Activated CD8-positive, alpha-beta T cell treated with anti-CD3 and anti-CD28 coated beads, Interleukin-2, amount 10 ng/mL, durations not matched to agents 7 days and 5 days (primary cell): ENCODE measurements at regions of chr5 and their contacts with region 1.

Region 1: GRCh38 chr5:134411546-134412266 is at the start of gene CDKN2AIPNL:
- DNase-seq: peak; percentile 92
- ATAC-seq: peak; percentile 100
- H3K4me3 Mint-ChIP-seq: peak within 1 kb of the TSS; percentile 96
- H3K27ac Mint-ChIP-seq: peak within 1 kb of the TSS; percentile 87
- H3K4me1 Mint-ChIP-seq: peaks cover 36% of the 10 kb centered on the region
- H3K27me3 Mint-ChIP-seq: no peaks in the 10 kb centered on the region
- total RNA-seq, gene CDKN2AIPNL: 31.3 to 32.5 TPM

Region 2: GRCh38 chr5:134370871-134371833 is 40.6 kb before region 1 on chr5 and contains the start of gene UBE2B:
- CTCF ChIA-PET with region 1: interaction called, 11 read pairs
- POLR2A ChIA-PET with region 1: interaction called, 26 read pairs
- DNase-seq: peak; percentile 99
- ATAC-seq: peak; percentile 73
- H3K4me3 Mint-ChIP-seq: peak within 1 kb of the TSS; percentile 99
- H3K27ac Mint-ChIP-seq: peak within 1 kb of the TSS; percentile 100
- H3K4me1 Mint-ChIP-seq: peaks cover 46% of the 10 kb centered on the region
- H3K27me3 Mint-ChIP-seq: no peaks in the 10 kb centered on the region
- total RNA-seq, gene UBE2B: 83.0 to 87.6 TPM

Region 3: DNA sequence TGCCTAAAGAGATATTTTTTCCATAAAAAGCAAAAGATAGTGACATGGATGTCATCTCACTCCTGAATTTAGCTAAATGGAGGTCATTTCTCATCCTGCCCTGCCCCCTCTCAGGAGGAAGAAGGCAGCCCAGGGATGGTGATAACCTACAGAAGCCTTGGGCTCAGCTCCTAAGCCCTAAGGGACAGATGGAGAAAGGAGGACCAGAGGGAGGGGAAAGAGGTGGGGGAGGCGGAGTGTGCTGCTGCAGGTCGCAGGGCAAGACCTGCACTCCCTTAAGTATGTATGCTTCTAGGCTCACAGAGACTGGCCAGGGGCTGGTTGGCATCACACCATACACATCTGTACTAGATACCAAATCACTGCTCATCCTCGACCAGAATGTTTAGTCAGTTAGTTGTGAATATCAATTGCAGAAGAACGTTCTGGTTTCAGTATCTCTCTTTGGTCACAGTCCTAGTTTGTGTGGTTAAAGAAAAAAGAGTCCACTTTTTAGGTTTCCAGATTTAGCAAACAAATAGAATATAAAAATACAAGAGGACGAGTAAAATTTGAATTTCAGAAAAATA is 18.4 kb after region 1 on chr5:
- CTCF ChIA-PET with region 1: interaction called, 15 read pairs
- POLR2A ChIA-PET with region 1: interaction called, 3 read pairs
- DNase-seq: no peak
- ATAC-seq: no peak
- H3K4me3 Mint-ChIP-seq: no peak overlapping the region
- H3K27ac Mint-ChIP-seq: no peak overlapping the region
- H3K4me1 Mint-ChIP-seq: peaks cover 6% of the 10 kb centered on the region
- H3K27me3 Mint-ChIP-seq: peaks cover 7% of the 10 kb centered on the region

Region 4: DNA sequence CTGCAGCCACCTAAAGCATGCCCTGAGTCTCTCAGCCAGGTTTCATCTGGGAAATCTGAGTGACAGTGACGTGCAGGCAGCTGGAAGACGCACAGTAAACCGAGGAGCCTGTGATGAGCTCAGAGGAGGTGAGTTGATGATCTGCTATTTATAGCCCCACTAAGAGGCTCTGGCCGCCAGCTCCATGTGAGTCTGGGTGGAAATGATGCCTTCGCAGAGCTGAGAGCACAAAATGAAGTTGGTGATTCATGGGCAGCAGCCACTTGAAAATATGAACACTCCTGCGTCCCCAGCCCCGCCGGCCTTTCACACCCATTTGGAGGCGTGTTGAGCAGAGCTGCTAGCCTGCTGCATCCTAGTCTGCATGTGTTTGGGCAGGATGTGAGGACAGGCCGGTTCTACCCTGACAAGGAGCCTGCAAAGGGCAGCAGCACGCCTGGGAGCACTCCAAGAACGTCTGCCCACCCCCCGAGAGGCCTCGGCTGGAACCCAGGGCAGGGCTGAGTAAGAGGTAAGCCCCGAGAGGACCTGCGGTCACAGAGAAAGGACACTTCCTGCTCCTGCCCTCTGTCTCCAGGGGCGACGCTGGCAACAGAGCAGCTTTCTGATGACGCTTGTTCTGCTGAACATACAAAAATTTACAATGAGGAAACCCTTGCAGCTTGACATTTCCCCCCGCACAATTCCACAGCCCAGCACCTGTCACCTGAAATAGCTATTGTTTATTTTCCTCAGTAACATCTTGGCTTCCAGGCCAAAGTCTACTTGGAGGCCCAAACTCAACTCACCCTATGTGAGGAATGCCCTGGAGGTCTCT is 25.0 kb after region 1 on chr5:
- CTCF ChIA-PET with region 1: interaction called, 13 read pairs
- POLR2A ChIA-PET with region 1: interaction called, 8 read pairs
- DNase-seq: peak; percentile 80
- ATAC-seq: peak; percentile 91
- H3K4me3 Mint-ChIP-seq: no peak overlapping the region
- H3K27ac Mint-ChIP-seq: peak overlapping the region; percentile 83
- H3K4me1 Mint-ChIP-seq: peaks cover 21% of the 10 kb centered on the region
- H3K27me3 Mint-ChIP-seq: no peaks in the 10 kb centered on the region

Region 5: DNA sequence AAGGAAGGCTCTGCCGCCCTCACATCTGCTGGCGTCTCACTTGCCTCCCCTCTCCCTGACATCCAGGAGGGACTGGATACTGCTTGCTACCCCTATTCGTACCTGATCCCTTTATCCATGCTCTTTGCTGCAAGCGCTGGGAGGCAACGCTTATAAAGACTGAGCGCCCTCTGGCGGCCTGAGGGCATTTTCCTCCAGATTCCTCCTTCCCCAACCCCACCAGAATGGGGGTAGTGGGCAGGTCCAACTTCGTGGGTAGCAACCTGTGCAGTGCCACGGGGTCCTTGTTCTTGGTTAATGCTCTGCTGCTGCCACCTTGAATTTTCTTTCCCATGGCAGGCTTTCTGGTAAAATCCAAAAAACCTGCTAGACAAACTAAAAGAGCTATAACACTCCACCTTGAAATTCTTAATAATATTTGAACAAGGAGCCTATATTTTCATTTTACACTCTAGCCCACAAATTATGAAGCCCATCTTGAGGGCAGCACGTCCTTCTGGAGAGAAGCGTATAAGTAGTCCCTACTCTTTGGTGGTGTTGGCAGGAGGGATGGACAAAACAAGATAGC is 166.2 kb after region 1 on chr5:
- CTCF ChIA-PET with region 1: interaction called, 18 read pairs
- POLR2A ChIA-PET with region 1: interaction called, 4 read pairs
- DNase-seq: peak; percentile 81
- ATAC-seq: peak; percentile 74
- H3K4me3 Mint-ChIP-seq: no peak overlapping the region
- H3K27ac Mint-ChIP-seq: peak overlapping the region; percentile 30
- H3K4me1 Mint-ChIP-seq: peaks cover 3% of the 10 kb centered on the region
- H3K27me3 Mint-ChIP-seq: no peaks in the 10 kb centered on the region